Activated T-helper 2 cell treated with anti-CD3 and anti-CD28 coated beads, Interferon-gamma antibody, Interleukin-2, Interleukin-4, amounts not matched to agents 10 μg/mL and 5 μg/mL and 100 μg/mL, durations not matched to agents 14 hours and 24 hours and 36 hours (primary cell): ENCODE measurements at regions of chr1 and their contacts with region 1.

Region 1: GRCh38 chr1:155934097-155934935 is at the start of gene KHDC4:
- DNase-seq: peak; percentile 96
- H3K4me3 Mint-ChIP-seq: no peak within 1 kb of the TSS
- H3K27ac Mint-ChIP-seq: peak within 1 kb of the TSS; percentile 58
- H3K4me1 Mint-ChIP-seq: peaks cover 28% of the 10 kb centered on the region
- H3K27me3 Mint-ChIP-seq: no peaks in the 10 kb centered on the region
- total RNA-seq, gene KHDC4: 78.4 and 83.5 TPM in 2 replicates

Region 2: GRCh38 chr1:155989242-155990004 is 55.1 kb after region 1 on chr1:
- intact Hi-C with region 1: loop called (anchors 1 kb)
- DNase-seq: peak; percentile 72
- H3K4me3 Mint-ChIP-seq: no peak overlapping the region
- H3K27ac Mint-ChIP-seq: no peak overlapping the region
- H3K4me1 Mint-ChIP-seq: peaks cover 15% of the 10 kb centered on the region
- H3K27me3 Mint-ChIP-seq: no peaks in the 10 kb centered on the region